ENCODE measurements at regions of chr11 and their contacts with region 1.

Region 1: GRCh38 chr11:102007567-102008437 is 39.4 kb upstream of the CFAP300 start:
- DNase-seq: peak; percentile 57
- ATAC-seq: peak; percentile 41; the same call in 1 of the 2 replicates
- H3K4me3 ChIP-seq: no peak overlapping the region
- H3K27ac ChIP-seq: no peak overlapping the region
- H3K4me1 ChIP-seq: peaks cover 20 to 31% of the 10 kb centered on the region in 2 experiments
- H3K27me3 ChIP-seq: no peaks in the 10 kb centered on the region
- CTCF ChIP-seq: peak; percentile 21 to 77 (median 49); a peak in 4 of 6 replicates
- POLR2A ChIP-seq: no peak
- RAD21 ChIP-seq: peak; percentile 80

Region 2: GRCh38 chr11:101456812-101457211 is 551.0 kb before region 1 on chr11:
- CTCF ChIA-PET with region 1: interaction called, 6 read pairs
- POLR2A ChIA-PET with region 1: no interaction called
- RAD21 ChIA-PET with region 1: no interaction called
- intact Hi-C with region 1: loop called (anchors 5 kb)
- DNase-seq: no peak
- ATAC-seq: peak; percentile 53; the same call in 1 of the 2 replicates
- H3K4me3 ChIP-seq: no peak overlapping the region
- H3K27ac ChIP-seq: no peak overlapping the region
- H3K4me1 ChIP-seq: no peaks in the 10 kb centered on the region
- H3K27me3 ChIP-seq: no peaks in the 10 kb centered on the region
- CTCF ChIP-seq: peak; percentile 21 to 56 (median 48); a peak in 4 of 6 replicates
- POLR2A ChIP-seq: no peak
- RAD21 ChIP-seq: peak; percentile 66

Region 3: DNA sequence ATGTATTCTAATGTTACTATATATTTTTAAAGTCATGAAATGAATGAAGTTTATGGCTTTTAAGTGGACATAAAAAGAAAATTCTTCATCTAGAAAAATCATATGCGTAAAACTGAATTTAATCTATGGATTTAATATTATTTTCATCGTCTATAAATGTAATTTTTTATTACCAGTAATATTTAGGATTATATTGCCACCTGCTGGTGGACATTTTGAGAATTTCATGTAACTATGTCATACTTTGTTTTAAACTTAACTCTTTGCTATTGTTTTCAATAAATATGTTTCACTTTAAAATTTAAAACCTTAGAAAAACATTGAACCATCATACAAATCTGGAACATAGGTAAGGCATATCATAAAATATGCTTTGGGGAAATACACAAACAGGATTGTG is 159.5 kb before region 1 on chr11:
- CTCF ChIA-PET with region 1: interaction called, 19 read pairs
- POLR2A ChIA-PET with region 1: interaction called, 3 read pairs
- RAD21 ChIA-PET with region 1: interaction called in 1 of 2 experiments, 3 read pairs
- intact Hi-C with region 1: no loop called
- DNase-seq: no peak
- ATAC-seq: no peak
- H3K4me3 ChIP-seq: no peak overlapping the region
- H3K27ac ChIP-seq: no peak overlapping the region
- H3K4me1 ChIP-seq: no peaks in the 10 kb centered on the region
- H3K27me3 ChIP-seq: no peaks in the 10 kb centered on the region
- CTCF ChIP-seq: peak in 2 of 3 experiments; percentile 49 to 63; a peak in 3 of 6 replicates
- POLR2A ChIP-seq: no peak
- RAD21 ChIP-seq: peak; percentile 71

Region 4: GRCh38 chr11:101996111-101996510 is 11.7 kb before region 1 on chr11:
- CTCF ChIA-PET with region 1: interaction called, 12 read pairs
- POLR2A ChIA-PET with region 1: no interaction called
- RAD21 ChIA-PET with region 1: no interaction called
- intact Hi-C with region 1: no loop called
- DNase-seq: no peak
- ATAC-seq: no peak
- H3K4me3 ChIP-seq: no peak overlapping the region
- H3K27ac ChIP-seq: no peak overlapping the region
- H3K4me1 ChIP-seq: no peaks in the 10 kb centered on the region
- H3K27me3 ChIP-seq: no peaks in the 10 kb centered on the region
- CTCF ChIP-seq: no peak
- POLR2A ChIP-seq: no peak
- RAD21 ChIP-seq: no peak

Region 5: GRCh38 chr11:102026212-102026611 is 18.4 kb after region 1 on chr11:
- CTCF ChIA-PET with region 1: no interaction called
- POLR2A ChIA-PET with region 1: no interaction called
- RAD21 ChIA-PET with region 1: no interaction called
- intact Hi-C with region 1: no loop called
- DNase-seq: no peak
- ATAC-seq: no peak
- H3K4me3 ChIP-seq: no peak overlapping the region
- H3K27ac ChIP-seq: no peak overlapping the region
- H3K4me1 ChIP-seq: no peaks in the 10 kb centered on the region
- H3K27me3 ChIP-seq: no peaks in the 10 kb centered on the region
- CTCF ChIP-seq: no peak
- POLR2A ChIP-seq: no peak
- RAD21 ChIP-seq: no peak

Region 6: GRCh38 chr11:102268329-102269193 is 260.8 kb after region 1 on chr11:
- CTCF ChIA-PET with region 1: interaction called, 6 read pairs
- POLR2A ChIA-PET with region 1: no interaction called
- RAD21 ChIA-PET with region 1: no interaction called
- intact Hi-C with region 1: loop called (anchors 5 kb)
- DNase-seq: peak; percentile 92
- ATAC-seq: peak; percentile 92
- H3K4me3 ChIP-seq: peak overlapping the region; percentile 34 to 55
- H3K27ac ChIP-seq: peak overlapping the region; percentile 47
- H3K4me1 ChIP-seq: peaks cover 17 to 34% of the 10 kb centered on the region in 2 experiments
- H3K27me3 ChIP-seq: no peaks in the 10 kb centered on the region
- CTCF ChIP-seq: peak; percentile 52 to 61 (median 53)
- POLR2A ChIP-seq: no peak
- RAD21 ChIP-seq: peak; percentile 84